Stomach (tissue), 19 donors: ENCODE measurements at regions of chr12 and their contacts with region 1.

Region 1: GRCh38 chr12:2853626-2854025 is 3.2 kb downstream of the TEX52 start:
- DNase-seq: peak; percentile 80 to 93
- H3K4me3 ChIP-seq: no peak overlapping the region
- H3K27ac ChIP-seq: no peak overlapping the region
- H3K4me1 ChIP-seq: peaks cover 0 to 13% (median 0%) of the 10 kb centered on the region in 4 donors
- H3K27me3 ChIP-seq: no peaks in the 10 kb centered on the region
- CTCF ChIP-seq: peak in 5 of 7 experiments; percentile 42 to 76 (median 66)
- EP300 ChIP-seq: no peak
- POLR2A ChIP-seq: no peak

Region 2: GRCh38 chr12:2129076-2129475 is 724.5 kb before region 1 on chr12:
- intact Hi-C with region 1: no loop called
- DNase-seq: no peak
- H3K4me3 ChIP-seq: no peak overlapping the region
- H3K27ac ChIP-seq: no peak overlapping the region
- H3K4me1 ChIP-seq: peaks cover 0 to 10% (median 0%) of the 10 kb centered on the region in 4 donors
- H3K27me3 ChIP-seq: no peaks in the 10 kb centered on the region
- CTCF ChIP-seq: no peak
- EP300 ChIP-seq: no peak
- POLR2A ChIP-seq: no peak

Region 3: DNA sequence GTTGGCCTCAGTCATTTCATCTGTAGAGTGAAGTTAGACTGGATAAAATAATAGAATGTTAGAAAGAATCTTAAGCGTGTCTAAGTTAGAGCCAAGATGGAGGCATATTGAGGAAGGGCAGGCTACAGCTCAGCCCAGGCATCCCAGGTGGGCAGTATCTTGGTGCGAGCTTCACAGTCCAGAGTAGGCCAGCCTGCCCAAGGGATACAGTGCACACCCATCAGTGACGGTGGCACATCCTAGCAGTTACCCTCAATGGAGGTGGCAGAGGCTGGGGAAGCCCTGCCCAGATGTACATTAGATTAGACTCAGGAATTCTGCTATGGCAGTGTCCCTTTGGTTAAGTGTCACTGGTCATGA is 58.6 kb after region 1 on chr12:
- intact Hi-C with region 1: no loop called
- DNase-seq: no peak
- H3K4me3 ChIP-seq: no peak overlapping the region
- H3K27ac ChIP-seq: no peak overlapping the region
- H3K4me1 ChIP-seq: peaks cover 0 to 5% (median 0%) of the 10 kb centered on the region in 4 donors
- H3K27me3 ChIP-seq: no peaks in the 10 kb centered on the region
- CTCF ChIP-seq: no peak
- EP300 ChIP-seq: no peak
- POLR2A ChIP-seq: no peak

Region 4: DNA sequence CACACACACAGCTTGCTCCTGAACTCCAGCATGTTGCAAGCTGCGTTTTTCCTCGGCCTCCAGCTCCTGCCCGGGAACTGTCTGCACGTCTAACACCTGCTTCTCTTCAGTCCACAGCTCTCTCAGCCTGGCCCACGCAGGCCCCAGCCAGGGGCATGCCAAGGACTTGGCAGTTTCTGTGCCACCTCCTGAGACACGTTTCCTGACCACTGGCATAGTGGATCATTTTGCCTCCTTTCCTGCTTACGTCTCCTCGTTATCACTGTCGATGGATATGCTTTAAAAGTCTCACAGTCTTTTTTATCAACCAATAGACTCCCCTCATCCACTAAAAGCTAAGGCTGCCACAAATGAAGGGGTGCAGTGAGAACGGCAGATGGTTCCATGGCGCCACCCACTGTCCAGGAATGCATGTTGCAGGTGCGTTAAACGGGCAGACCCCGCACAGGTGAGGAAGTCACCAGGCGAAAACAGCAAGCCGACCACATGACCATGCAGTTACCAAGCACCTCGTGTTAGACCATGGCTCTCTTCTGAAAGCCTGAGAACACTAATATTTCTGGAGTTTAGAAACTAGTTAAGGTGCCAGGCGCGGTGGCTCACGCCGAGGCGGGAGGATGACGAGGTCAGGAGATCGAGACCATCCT is 90.9 kb after region 1 on chr12:
- intact Hi-C with region 1: loop called (anchors 10 kb)
- DNase-seq: peak; percentile 72 to 84
- H3K4me3 ChIP-seq: peak overlapping the region in 3 of 4 donors; percentile 13 to 29 (median 19)
- H3K27ac ChIP-seq: peak overlapping the region in 2 of 5 donors; percentile 2 to 56
- H3K4me1 ChIP-seq: peaks cover 0 to 10% (median 5%) of the 10 kb centered on the region in 4 donors
- H3K27me3 ChIP-seq: no peaks in the 10 kb centered on the region
- CTCF ChIP-seq: peak in 5 of 7 experiments; percentile 67 to 84 (median 73)
- EP300 ChIP-seq: no peak
- POLR2A ChIP-seq: no peak

Region 5: DNA sequence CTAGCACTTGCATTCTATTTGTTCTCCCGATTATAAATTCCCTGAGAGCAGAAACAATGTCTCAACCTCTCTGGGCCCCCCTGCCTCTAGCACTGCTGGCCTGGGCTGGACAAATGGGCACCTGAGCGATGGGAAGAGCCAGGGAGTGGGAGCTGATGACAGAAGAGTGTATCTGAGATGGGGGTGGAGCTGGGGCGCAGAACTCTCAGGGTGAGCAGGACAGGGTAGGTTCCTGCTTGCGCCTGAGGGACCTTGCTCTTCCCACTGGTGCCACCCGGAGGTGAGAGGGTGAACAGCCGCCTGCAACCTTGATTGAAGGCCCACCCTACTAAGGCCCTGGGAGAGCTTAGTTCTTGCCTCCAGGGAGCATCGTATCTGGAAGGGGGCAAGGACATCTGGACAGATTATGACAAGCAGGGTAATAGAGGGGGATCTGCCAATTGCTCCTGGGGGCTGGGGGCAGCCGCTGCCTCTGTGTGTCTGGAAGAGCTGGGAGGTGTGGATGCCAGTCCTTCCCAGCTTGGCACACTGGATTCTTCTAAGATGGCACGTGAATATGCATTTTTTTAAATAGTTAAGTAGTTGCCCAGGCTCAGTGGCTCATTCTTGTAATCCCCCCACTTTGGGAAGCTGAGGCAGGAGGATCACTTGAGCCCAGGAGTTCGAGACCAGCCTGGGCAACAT is 180.6 kb after region 1 on chr12:
- intact Hi-C with region 1: loop called (anchors 10 kb)
- DNase-seq: peak; percentile 53 to 85
- H3K4me3 ChIP-seq: no peak overlapping the region
- H3K27ac ChIP-seq: no peak overlapping the region
- H3K4me1 ChIP-seq: peaks cover 0 to 9% (median 4%) of the 10 kb centered on the region in 4 donors
- H3K27me3 ChIP-seq: no peaks in the 10 kb centered on the region
- CTCF ChIP-seq: peak in 5 of 7 experiments; percentile 42 to 70 (median 50)
- EP300 ChIP-seq: no peak
- POLR2A ChIP-seq: no peak